Activated CD8-positive, alpha-beta T cell treated with anti-CD3 and anti-CD28 coated beads, Interleukin-2, amount 10 ng/mL, durations not matched to agents 7 days and 5 days (primary cell): ENCODE measurements at regions of chr16 and their contacts with region 1.

Region 1: GRCh38 chr16:69123910-69124309 is 8.5 kb downstream of the CHTF8 start:
- DNase-seq: peak; percentile 80
- ATAC-seq: peak; percentile 63
- H3K4me3 Mint-ChIP-seq: no peak overlapping the region
- H3K27ac Mint-ChIP-seq: no peak overlapping the region
- H3K4me1 Mint-ChIP-seq: peaks cover 5% of the 10 kb centered on the region
- H3K27me3 Mint-ChIP-seq: no peaks in the 10 kb centered on the region

Region 2: GRCh38 chr16:68528686-68529379 is 595.1 kb before region 1 on chr16:
- CTCF ChIA-PET with region 1: interaction called, 16 read pairs
- POLR2A ChIA-PET with region 1: no interaction called
- DNase-seq: peak; percentile 93
- ATAC-seq: peak; percentile 80
- H3K4me3 Mint-ChIP-seq: peak overlapping the region; percentile 82
- H3K27ac Mint-ChIP-seq: no peak overlapping the region
- H3K4me1 Mint-ChIP-seq: peaks cover 21% of the 10 kb centered on the region
- H3K27me3 Mint-ChIP-seq: no peaks in the 10 kb centered on the region

Region 3: GRCh38 chr16:68848786-68849185 is 275.1 kb before region 1 on chr16:
- CTCF ChIA-PET with region 1: interaction called, 38 read pairs
- POLR2A ChIA-PET with region 1: no interaction called
- DNase-seq: no peak
- ATAC-seq: no peak
- H3K4me3 Mint-ChIP-seq: no peak overlapping the region
- H3K27ac Mint-ChIP-seq: no peak overlapping the region
- H3K4me1 Mint-ChIP-seq: peaks cover 26% of the 10 kb centered on the region
- H3K27me3 Mint-ChIP-seq: no peaks in the 10 kb centered on the region

Region 4: DNA sequence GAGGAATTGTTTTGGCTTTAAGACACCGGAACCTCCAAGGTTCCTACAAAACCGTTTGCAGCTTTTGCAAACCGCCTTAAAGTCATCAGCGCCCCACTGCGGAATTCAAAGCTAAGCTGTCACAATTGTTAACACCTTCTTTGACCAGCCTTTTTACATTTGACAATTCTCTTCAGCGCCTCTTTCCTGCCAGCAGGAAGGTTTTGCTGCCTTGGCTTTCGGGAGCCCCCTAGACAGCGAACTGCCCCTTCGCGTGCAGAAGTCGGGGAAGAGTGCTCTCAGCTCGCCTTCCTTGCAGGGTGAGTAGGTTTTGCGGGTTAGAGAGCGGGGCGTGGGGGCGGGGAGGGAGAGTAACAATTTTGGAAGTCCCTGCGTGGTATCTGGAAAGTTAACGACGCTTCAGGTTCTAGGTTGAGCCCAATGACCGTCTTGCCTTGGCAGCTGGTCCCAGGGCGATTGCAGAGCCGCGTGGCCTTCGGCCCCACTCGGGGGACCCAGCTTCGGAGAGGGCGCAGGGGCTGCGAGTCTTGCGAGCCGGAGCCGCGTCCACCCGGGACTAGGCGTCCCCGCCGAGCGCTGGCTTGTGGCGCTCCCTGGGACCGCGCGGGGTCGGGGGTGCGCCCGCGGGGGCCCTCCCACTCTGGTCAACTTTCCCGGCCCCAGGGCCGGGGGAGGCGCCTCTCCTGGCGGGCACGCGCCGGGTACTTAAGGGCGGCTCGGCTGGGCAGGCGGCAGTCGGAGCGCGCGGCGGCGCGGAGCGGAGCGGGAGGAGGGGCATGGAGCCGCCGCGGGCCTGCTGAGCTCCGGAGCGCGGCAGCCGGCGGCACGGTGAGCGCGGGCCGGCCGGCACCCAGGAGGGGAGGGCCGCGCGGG is 18.2 kb before region 1 on chr16 and contains the start of gene HAS3:
- CTCF ChIA-PET with region 1: interaction called, 49 read pairs
- POLR2A ChIA-PET with region 1: no interaction called
- DNase-seq: peak; percentile 51
- ATAC-seq: peak; percentile 81
- H3K4me3 Mint-ChIP-seq: peak within 1 kb of the TSS; percentile 72
- H3K27ac Mint-ChIP-seq: no peak within 1 kb of the TSS
- H3K4me1 Mint-ChIP-seq: peaks cover 20% of the 10 kb centered on the region
- H3K27me3 Mint-ChIP-seq: peaks cover 37% of the 10 kb centered on the region
- total RNA-seq, gene HAS3: 0.44 to 0.47 TPM

Region 5: DNA sequence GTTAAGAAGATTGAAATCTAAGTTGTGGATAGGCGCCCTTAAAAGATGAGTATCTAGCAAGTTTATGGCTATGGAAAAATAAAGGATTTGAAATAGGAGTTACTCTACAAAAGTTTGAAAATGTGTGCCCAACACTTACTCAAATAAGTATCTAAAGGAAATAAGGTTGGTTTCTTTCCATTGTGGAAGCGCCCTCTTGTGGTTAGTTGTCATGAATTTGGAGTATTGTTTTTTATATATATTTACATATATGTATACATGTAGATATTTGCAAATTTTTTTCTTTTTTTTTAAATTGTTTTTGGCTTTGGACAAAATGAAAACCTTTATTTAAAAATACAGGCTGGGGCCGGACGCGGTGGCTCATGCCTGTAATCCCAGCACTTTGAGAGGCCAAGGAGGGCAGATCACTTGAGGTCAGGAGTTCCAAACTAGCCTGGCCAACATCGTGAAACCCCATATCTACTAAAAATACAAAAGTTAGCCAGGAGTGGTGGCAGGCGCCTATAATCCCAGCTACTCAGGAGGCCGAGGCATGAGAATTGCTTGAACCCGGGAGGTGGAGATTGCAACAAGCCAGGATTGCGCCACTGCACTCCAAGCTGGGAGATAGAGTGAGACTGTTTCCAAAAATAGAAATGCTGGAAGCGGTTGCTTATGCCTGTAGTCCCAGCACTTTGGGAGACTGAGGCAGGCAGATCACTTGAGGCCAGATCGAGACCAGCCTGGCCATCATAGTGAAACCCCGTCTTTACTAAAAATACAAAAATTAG is 163.2 kb after region 1 on chr16:
- CTCF ChIA-PET with region 1: interaction called, 11 read pairs
- POLR2A ChIA-PET with region 1: no interaction called
- DNase-seq: peak; percentile 69
- ATAC-seq: peak; percentile 53
- H3K4me3 Mint-ChIP-seq: no peak overlapping the region
- H3K27ac Mint-ChIP-seq: no peak overlapping the region
- H3K4me1 Mint-ChIP-seq: peaks cover 2% of the 10 kb centered on the region
- H3K27me3 Mint-ChIP-seq: no peaks in the 10 kb centered on the region